A549 (cell line): ENCODE measurements at regions of chr16 and their contacts with region 1.

Region 1: DNA sequence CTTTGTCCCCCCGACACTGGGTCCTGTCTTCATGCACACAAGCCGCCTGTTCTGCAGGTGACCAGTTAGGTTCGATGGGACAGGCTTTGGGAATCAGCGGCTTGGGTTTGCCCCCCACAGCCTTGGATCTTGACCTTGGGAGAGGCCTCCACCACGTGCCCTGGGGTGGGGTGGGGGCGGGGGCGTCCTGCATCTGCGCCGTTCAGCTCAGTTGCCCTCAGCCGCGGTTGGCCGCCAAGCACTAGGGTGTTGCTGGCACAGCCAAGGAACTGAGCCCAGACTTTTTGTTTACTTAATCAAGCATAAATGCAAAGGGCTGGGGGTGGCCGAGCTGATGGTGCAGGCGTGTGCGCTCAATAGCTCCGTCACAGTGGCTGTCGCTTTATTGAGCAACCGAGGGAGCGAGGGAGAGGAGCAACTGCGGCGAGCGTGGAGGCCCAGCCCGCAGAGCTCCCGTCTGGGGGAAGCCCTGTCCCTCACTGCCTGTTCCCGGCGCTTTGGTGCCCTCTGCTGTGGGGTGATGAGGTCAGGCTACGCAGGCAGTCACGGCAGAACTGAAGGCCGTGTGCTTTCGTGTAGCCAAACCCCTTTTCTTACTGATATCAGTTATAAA is 33.9 kb downstream of the JPH3 start:
- DNase-seq: peak; percentile 87 to 98
- ATAC-seq: peak; percentile 90 to 95
- H3K4me3 ChIP-seq: peak overlapping the region; percentile 53
- H3K27ac ChIP-seq: peak overlapping the region; percentile 75 to 85
- H3K4me1 ChIP-seq: 0 out of 3 replicates have a peak, but pooled peaks cover 7% of the 10 kb centered on the region
- CTCF ChIP-seq: peak; percentile 84
- EP300 ChIP-seq: no peak
- POLR2A ChIP-seq: peak; percentile 32
- RAD21 ChIP-seq: peak; percentile 91 to 95

Region 2: DNA sequence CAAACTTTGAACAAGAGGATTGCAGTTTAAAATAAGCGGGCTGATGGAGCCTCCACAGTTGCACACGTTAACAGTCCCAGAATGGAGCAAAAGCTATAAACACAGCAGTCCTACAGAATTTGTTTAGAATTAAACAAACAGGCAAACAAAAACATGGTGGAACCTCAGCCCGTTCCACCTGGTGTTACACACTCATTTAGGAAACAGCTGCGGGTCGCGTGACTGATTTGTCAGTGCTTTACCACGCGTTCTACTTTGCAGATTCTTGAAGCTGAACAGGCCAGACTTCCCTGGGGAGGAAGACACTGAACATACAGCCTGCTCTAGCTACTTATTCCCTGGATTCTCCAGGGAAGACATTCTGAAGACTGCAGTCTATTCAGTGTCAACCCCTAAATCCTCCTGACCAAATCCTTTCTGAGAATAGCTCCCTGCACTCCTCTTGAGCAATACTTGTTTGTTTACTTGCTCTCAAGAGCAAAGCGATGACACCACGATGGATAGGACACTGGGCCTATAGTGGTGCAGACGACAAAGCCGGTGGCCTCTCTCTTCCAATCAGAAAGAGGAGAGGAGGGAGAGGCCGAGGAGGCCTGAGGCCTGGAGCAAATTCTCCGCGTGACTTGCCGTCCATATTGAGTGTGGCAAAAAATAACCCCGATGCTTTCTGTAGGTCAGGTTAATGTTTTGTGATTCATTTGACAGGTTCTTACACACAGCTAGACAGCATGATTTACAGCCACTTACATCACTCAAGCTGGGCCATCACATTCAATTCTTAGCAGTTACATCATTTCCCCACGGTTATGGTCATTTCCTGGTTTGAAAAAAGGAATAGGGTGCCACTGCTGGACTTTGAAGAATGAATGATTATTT is 248.0 kb before region 1 on chr16:
- CTCF ChIA-PET with region 1: interaction called, 33 read pairs
- POLR2A ChIA-PET with region 1: interaction called, 3 read pairs
- DNase-seq: peak; percentile 95 to 100
- ATAC-seq: peak; percentile 70 to 83
- H3K4me3 ChIP-seq: 0 out of 3 replicates have a peak overlapping the region, but pooled peaks have one; percentile 20
- H3K27ac ChIP-seq: peak overlapping the region; percentile 80 to 98
- H3K4me1 ChIP-seq: peaks cover 40% of the 10 kb centered on the region
- CTCF ChIP-seq: no peak
- EP300 ChIP-seq: peak; percentile 44 to 51; a peak in 2 of 5 replicates
- POLR2A ChIP-seq: no peak
- RAD21 ChIP-seq: no peak

Region 3: DNA sequence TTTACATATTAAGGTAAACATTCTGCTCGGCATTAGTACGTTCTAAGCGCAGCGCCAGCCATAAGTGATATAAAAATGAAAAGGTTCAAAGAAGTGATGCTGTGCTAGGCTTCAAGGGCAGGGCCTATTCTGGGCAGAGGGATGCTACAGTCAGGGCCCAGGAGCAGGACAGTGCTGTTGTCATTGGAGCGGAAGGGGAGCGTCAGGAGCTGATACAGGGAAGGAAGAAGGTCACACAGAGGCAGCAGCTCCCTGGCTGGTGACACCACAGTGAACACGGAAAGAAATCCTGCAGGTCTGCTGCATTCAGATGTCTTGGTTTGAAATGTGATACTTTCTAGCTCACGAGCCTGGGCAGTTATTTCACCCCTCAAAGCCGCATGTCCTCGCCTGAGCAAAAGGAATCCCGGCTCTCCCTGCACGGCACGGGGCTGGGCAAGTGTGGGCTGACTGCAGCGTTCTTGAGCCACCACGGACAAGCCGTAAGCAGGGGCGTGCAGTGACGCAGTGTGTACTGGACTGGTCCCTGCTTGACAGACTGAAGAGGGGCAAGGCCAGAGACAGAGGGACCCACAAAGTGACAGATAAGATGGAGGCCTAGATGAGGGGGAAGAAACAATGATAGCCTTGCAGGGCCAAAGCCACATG is 184.5 kb before region 1 on chr16:
- CTCF ChIA-PET with region 1: interaction called, 20 read pairs
- POLR2A ChIA-PET with region 1: no interaction called
- DNase-seq: no peak
- ATAC-seq: no peak
- H3K4me3 ChIP-seq: no peak overlapping the region
- H3K27ac ChIP-seq: no peak overlapping the region
- H3K4me1 ChIP-seq: no peaks in the 10 kb centered on the region; the same call in 2 of the 3 replicates
- CTCF ChIP-seq: no peak
- EP300 ChIP-seq: no peak
- POLR2A ChIP-seq: no peak
- RAD21 ChIP-seq: no peak

Region 4: DNA sequence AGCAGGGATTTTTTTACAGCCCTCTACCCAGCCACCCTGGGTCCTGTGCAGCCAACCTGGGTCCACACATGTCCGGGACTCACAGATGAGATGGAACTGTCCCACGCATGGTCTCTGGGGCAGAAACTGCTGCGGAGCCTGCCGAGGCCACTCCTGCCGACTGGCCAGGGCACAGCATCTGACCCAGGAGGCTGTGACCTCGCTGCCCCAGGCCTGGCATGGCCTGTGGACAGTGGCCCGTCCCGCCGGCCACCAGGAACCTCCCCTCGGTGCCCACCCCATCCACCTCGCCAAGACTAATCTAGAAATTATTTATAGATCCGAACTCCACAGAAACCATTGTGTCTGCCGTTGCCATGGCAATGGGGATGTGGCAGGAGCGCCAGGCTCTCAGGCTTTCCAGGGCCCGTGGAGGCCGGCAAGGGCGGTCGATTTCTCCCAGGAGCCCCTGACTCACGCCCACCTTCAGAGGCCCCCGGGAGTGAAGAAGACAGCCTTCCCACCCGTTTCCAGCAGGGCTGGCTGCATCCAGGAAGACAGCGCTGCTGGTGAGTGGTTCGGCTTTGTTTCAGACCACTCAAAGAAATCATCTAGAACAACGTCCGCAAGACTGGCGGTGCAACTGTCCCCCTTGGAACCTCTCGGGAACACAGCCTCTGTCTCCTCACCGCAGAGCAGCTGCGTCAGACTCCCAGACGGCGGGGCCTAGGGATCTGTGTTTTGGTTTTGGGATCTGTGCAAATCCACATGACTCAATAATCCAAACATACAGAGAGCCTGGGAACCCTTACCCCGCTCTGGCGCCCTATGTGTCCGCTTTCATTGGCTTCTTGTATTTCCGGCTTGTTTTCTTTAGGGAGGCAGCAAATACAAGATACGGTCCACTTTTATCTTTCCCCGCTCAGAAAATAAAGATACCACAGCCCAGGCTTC is 95.0 kb before region 1 on chr16:
- CTCF ChIA-PET with region 1: interaction called, 21 read pairs
- POLR2A ChIA-PET with region 1: no interaction called
- DNase-seq: no peak
- ATAC-seq: no peak; a peak in 2 of 6 replicates
- H3K4me3 ChIP-seq: no peak overlapping the region
- H3K27ac ChIP-seq: no peak overlapping the region
- H3K4me1 ChIP-seq: no peaks in the 10 kb centered on the region
- CTCF ChIP-seq: no peak
- EP300 ChIP-seq: no peak
- POLR2A ChIP-seq: no peak
- RAD21 ChIP-seq: no peak

Region 5: DNA sequence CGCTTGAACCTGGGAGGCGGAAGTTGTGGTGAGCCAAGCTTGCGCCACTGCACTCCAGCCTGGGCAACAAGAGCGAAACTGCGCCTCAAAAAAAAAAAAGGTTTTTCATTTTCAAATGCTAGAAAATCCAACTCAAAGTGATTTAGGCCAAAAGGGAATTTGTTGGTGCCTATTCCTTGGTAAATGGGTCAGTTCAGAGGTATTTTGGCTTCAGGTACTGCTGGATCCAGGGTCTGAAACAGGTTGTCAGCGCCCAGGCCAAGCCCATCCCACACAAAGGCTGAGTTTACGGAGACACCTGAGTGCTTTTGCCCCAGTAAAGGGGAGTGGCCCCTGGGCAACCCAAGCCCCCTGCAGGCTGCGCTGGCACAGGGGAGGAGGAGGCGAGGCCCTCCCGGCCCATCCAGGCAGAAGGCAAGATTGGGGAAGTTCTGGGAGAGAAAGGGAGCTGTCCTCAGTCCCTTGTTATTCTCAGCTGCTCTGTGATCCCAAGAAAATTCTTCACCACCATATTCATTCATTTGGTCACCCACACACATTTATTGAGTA is 42.4 kb before region 1 on chr16:
- CTCF ChIA-PET with region 1: interaction called, 219 read pairs
- POLR2A ChIA-PET with region 1: no interaction called
- DNase-seq: no peak
- ATAC-seq: no peak
- H3K4me3 ChIP-seq: no peak overlapping the region
- H3K27ac ChIP-seq: no peak overlapping the region
- H3K4me1 ChIP-seq: no peaks in the 10 kb centered on the region
- CTCF ChIP-seq: no peak
- EP300 ChIP-seq: no peak
- POLR2A ChIP-seq: no peak
- RAD21 ChIP-seq: no peak

Region 6: GRCh38 chr16:87661561-87661960 is 25.4 kb after region 1 on chr16:
- CTCF ChIA-PET with region 1: interaction called, 150 read pairs
- POLR2A ChIA-PET with region 1: no interaction called
- DNase-seq: peak; percentile 37 to 43
- ATAC-seq: peak; percentile 67 to 70; a peak in 4 of 6 replicates
- H3K4me3 ChIP-seq: no peak overlapping the region
- H3K27ac ChIP-seq: no peak overlapping the region
- H3K4me1 ChIP-seq: no peaks in the 10 kb centered on the region
- CTCF ChIP-seq: no peak
- EP300 ChIP-seq: no peak
- POLR2A ChIP-seq: no peak
- RAD21 ChIP-seq: no peak